CD8-positive, alpha-beta T cell (primary cell): ENCODE measurements at regions of chr16 and their contacts with region 1.

Region 1: DNA sequence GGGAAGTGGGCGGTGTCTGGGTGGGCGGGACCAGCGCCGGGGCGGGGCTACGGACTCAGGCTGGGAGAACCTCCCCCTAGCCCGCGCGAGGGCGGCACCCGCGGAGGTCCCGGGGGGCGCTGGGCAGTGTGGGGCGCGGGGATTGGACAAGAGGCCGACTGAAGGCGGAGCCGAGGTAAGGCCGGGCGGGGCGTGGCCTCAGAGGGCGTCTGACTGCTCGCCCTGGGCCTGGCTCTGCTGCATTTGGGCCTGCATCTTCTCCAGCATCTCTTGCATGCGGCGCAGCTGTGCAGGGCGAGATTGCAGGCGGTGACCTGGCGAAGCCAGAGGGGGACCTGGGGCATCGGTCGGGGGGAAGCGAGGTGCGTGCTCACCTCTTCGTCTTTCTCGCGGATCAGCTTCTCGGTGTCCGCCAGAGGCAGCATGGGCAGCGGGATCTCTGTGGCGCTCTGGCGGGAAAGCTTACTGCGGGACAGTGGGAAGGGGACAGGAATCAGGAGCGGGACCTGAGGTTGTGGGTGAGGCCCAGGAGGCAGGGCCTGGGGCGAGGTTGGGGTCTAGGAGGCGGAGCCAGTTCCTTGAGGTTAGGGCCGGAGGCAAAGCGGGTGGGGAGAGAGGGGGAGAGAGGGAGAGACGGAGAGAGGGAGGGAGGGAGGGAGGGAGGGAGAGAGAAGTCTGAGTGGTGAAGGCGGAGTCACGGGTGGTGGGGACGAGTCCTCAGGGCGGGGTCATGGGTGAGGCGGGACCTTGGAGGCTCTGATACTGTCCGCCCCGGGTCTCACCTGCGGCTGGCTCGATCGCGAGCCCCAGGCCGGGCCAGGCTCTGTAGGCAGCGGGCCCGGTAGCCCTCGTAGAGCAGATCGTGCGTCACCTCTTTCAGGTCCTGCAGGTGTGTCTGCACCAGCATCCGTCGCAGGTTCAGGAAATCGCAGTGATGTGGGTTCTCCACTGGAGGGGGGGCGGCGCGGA is 3.8 kb downstream of the SEPTIN1 start:
- DNase-seq: peak; percentile 99 to 100 (median 100)
- ATAC-seq: peak; percentile 78
- H3K4me3 ChIP-seq: peak overlapping the region; percentile 82 to 94
- H3K4me3 Mint-ChIP-seq: peak overlapping the region; percentile 98
- H3K27ac ChIP-seq: peak overlapping the region; percentile 99 to 100
- H3K27ac Mint-ChIP-seq: peak overlapping the region; percentile 100
- H3K4me1 ChIP-seq: peaks cover 58% of the 10 kb centered on the region
- H3K4me1 Mint-ChIP-seq: peaks cover 60% of the 10 kb centered on the region
- H3K27me3 ChIP-seq: no peaks in the 10 kb centered on the region
- H3K27me3 Mint-ChIP-seq: no peaks in the 10 kb centered on the region
- CTCF ChIP-seq: no peak

Region 2: GRCh38 chr16:30335598-30336474 is 42.7 kb before region 1 on chr16:
- CTCF ChIA-PET with region 1: no interaction called
- POLR2A ChIA-PET with region 1: interaction called, 6 read pairs
- intact Hi-C with region 1: loop called in 1 of 2 experiments (anchors 2 kb)
- DNase-seq: peak in 4 of 9 experiments; percentile 32 to 72 (median 60)
- ATAC-seq: peak; percentile 2
- H3K4me3 ChIP-seq: peak overlapping the region; percentile 38 to 51
- H3K4me3 Mint-ChIP-seq: peak overlapping the region; percentile 86
- H3K27ac ChIP-seq: peak overlapping the region; percentile 50 to 52
- H3K27ac Mint-ChIP-seq: peak overlapping the region; percentile 86
- H3K4me1 ChIP-seq: peaks cover 10% of the 10 kb centered on the region
- H3K4me1 Mint-ChIP-seq: peaks cover 32% of the 10 kb centered on the region
- H3K27me3 ChIP-seq: no peaks in the 10 kb centered on the region
- H3K27me3 Mint-ChIP-seq: no peaks in the 10 kb centered on the region
- CTCF ChIP-seq: no peak

Region 3: DNA sequence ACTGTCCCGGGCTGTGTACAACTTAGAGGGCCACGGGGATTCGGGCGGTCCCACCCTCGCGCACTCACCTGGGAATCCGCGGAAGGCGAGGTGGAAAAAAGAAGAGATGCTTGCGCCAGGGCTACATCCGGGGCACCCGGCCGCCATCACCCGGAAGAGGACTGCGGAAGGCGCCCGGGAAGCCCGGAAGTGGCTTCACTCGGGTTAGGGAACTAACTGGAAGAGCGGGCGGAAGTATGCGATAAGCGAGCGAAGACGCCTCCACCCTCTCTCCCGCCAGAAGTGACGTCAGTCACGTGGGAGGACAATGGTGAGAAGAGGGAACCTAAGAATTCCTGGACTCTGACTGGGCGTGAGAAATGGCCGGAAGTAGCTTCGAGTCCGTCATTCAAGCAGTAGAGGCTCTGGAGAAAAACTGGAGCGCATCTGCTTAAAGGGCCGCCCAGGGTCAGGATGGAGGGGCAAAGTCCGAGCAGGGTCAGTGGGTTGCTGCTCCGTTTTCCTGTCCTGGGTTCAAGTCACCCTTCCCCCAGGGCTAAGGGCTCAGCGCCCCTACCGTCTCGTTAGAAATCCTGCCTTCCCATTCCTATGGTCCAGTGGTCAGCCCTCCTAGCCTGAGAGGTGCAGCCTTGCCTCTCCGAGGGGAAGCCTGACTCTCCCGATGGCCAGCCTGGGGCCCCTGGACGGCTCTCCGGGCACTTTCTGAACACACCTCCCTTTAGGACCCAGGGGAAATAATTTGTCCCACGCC is 23.2 kb before region 1 on chr16 and contains the start of gene CD2BP2:
- CTCF ChIA-PET with region 1: interaction called, 5 read pairs
- POLR2A ChIA-PET with region 1: interaction called, 6 read pairs
- intact Hi-C with region 1: loop called (anchors 1 kb)
- DNase-seq: peak; percentile 72 to 97 (median 86)
- ATAC-seq: peak; percentile 88
- H3K4me3 ChIP-seq: peak within 1 kb of the TSS; percentile 70 to 98
- H3K4me3 Mint-ChIP-seq: peak within 1 kb of the TSS; percentile 94
- H3K27ac ChIP-seq: peak within 1 kb of the TSS; percentile 63 to 98
- H3K27ac Mint-ChIP-seq: peak within 1 kb of the TSS; percentile 98
- H3K4me1 ChIP-seq: peaks cover 32% of the 10 kb centered on the region
- H3K4me1 Mint-ChIP-seq: peaks cover 27% of the 10 kb centered on the region
- H3K27me3 ChIP-seq: no peaks in the 10 kb centered on the region
- H3K27me3 Mint-ChIP-seq: no peaks in the 10 kb centered on the region
- CTCF ChIP-seq: no peak
- total RNA-seq, gene CD2BP2: 35.4 to 35.9 TPM

Region 4: DNA sequence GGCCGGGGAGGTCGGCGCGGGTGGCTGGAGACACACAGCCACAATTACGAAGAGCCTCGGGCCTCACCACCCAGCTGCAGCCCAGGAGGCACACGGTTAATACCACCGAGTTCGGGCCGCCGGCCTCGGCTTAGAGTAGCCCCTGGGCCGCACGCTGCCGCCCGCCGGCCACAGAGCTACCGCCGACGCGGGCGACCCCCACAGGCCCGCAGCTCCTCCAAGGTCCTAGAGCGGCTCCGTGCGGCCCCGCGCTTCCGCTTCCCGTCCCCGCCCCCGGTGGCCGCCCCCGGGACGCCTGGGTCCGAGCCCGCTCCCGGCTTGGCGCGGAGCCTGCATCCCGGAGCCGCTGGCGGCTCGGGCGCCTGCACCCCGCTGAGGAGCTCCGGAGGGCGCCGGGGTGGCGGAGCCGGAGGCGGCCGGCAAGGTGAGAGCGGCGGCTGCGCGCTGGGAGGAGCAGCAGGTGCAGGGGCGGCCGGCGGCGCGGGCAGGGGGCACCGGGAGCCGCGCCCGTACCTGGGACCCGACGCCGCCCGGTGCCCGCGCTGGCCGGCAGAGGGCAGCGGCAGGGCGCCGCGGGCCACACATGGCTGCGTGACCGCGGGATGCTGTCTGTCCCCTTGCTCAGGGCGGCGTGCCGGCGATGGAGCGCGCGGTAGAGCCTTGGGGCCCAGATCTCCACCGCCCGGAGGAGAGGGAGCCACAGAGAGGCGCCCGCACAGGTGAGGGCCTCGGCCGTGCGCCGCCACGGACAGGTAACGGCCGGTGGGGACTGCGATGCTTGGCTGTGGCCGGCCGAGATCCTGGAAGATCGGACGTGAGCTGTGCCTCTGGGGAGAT is 16.9 kb after region 1 on chr16 and contains the start of gene ZNF48:
- CTCF ChIA-PET with region 1: interaction called, 10 read pairs
- POLR2A ChIA-PET with region 1: interaction called, 65 read pairs
- intact Hi-C with region 1: loop called (anchors 1 kb)
- DNase-seq: peak in 8 of 9 experiments; percentile 46 to 81 (median 60)
- ATAC-seq: peak; percentile 68
- H3K4me3 ChIP-seq: peak within 1 kb of the TSS; percentile 69 to 77
- H3K4me3 Mint-ChIP-seq: peak within 1 kb of the TSS; percentile 81
- H3K27ac ChIP-seq: peak within 1 kb of the TSS; percentile 34 to 40
- H3K27ac Mint-ChIP-seq: peak within 1 kb of the TSS; percentile 69
- H3K4me1 ChIP-seq: peaks cover 50% of the 10 kb centered on the region
- H3K4me1 Mint-ChIP-seq: peaks cover 38% of the 10 kb centered on the region
- H3K27me3 ChIP-seq: no peaks in the 10 kb centered on the region
- H3K27me3 Mint-ChIP-seq: no peaks in the 10 kb centered on the region
- CTCF ChIP-seq: no peak
- total RNA-seq, gene ZNF48: 2.3 to 2.4 TPM

Region 5: DNA sequence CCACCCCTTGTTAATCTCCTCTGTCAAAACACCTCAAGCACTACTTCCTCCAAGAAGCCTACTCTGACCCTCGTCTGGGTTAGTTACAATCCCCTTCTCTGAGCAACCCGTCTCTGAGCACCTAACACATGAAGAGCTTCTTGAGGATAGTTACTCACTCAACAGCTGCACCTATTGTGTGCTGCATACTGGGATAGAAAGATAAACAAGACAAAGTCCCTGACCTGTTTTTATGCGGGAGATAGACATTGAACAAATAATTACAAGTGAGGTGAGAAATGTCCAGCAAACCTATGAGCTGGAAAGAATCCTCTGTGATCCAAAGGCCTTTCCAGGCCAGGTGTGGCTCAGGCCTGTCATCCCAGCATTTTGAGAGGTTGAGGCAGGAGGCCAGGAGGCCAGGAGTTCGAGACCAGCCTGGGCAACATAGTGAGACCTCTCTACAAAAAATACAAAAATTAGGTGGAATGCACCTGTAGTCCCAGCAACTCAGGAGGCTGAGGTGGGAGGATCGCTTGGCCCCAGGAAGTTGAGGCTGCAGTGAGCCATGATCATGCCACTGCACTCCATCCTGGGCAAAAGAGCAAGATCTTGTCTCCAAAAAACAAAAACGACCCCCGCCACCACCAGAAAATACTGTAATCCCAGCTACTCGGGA is 23.4 kb after region 1 on chr16:
- CTCF ChIA-PET with region 1: interaction called, 50 read pairs
- POLR2A ChIA-PET with region 1: interaction called, 50 read pairs
- intact Hi-C with region 1: loop called (anchors 1 to 2 kb)
- DNase-seq: no peak
- ATAC-seq: no peak
- H3K4me3 ChIP-seq: no peak overlapping the region
- H3K4me3 Mint-ChIP-seq: peak overlapping the region; percentile 88
- H3K27ac ChIP-seq: no peak overlapping the region
- H3K27ac Mint-ChIP-seq: no peak overlapping the region
- H3K4me1 ChIP-seq: peaks cover 42% of the 10 kb centered on the region
- H3K4me1 Mint-ChIP-seq: peaks cover 31% of the 10 kb centered on the region
- H3K27me3 ChIP-seq: no peaks in the 10 kb centered on the region
- H3K27me3 Mint-ChIP-seq: no peaks in the 10 kb centered on the region
- CTCF ChIP-seq: no peak

Region 6: GRCh38 chr16:30417529-30418349 is 39.2 kb after region 1 on chr16:
- CTCF ChIA-PET with region 1: no interaction called
- POLR2A ChIA-PET with region 1: interaction called, 25 read pairs
- intact Hi-C with region 1: no loop called
- DNase-seq: peak; percentile 78 to 98 (median 88)
- ATAC-seq: peak; percentile 87
- H3K4me3 ChIP-seq: peak overlapping the region; percentile 52 to 72
- H3K4me3 Mint-ChIP-seq: peak overlapping the region; percentile 74
- H3K27ac ChIP-seq: peak overlapping the region; percentile 81 to 91
- H3K27ac Mint-ChIP-seq: peak overlapping the region; percentile 77
- H3K4me1 ChIP-seq: peaks cover 18% of the 10 kb centered on the region
- H3K4me1 Mint-ChIP-seq: peaks cover 7% of the 10 kb centered on the region
- H3K27me3 ChIP-seq: no peaks in the 10 kb centered on the region
- H3K27me3 Mint-ChIP-seq: no peaks in the 10 kb centered on the region
- CTCF ChIP-seq: no peak